ENCODE measurements at regions of chr17 and their contacts with region 1.

Region 1: GRCh38 chr17:45385331-45385997 is 47.2 kb downstream of the ARHGAP27 start:
- DNase-seq: peak; percentile 94
- H3K4me3 Mint-ChIP-seq: no peak overlapping the region
- H3K27ac Mint-ChIP-seq: no peak overlapping the region
- H3K4me1 Mint-ChIP-seq: peaks cover 13% of the 10 kb centered on the region
- H3K27me3 Mint-ChIP-seq: no peaks in the 10 kb centered on the region

Region 2: DNA sequence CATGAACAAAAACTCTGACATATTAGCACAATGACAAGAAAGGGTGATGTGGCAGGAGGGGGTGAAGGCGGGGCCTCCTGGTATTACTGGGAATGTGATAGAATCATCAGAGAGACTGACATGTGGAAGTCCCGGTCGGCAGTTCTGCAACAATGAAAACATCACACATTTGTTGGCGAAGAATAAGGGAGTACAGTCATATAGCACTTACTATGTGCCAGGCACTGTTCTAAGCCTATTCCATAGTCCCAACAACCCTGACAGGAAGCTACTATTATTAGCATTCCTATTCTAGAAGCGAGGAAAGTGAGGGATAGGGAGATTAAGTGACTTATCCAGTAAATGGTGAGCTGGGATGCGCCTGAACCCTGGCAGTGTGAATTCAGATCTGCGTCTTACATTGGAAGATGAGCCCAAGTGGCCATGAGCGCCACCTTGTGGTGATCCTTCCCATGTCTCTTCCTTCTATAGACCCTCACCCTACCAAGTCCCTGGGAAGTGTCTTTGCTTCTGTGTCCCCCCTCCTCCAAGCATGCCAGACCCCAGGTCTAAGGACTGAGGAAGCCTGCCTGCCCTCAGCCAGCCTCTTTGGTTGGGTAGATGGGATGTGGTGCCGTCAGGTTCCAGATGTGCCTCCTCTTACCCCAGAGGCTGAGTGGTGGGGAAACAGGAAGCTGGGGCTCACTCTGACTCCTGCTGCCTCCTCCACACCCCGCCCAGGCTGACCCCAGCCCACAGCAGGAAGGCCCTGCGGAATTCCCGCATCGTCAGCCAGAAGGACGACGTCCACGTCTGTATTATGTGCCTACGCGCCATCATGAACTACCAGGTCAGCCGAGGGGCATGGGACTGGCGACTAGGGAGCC is 149.8 kb before region 1 on chr17:
- CTCF ChIA-PET with region 1: interaction called, 13 read pairs
- intact Hi-C with region 1: loop called (anchors 1 kb)
- DNase-seq: peak; percentile 89
- H3K4me3 Mint-ChIP-seq: no peak overlapping the region
- H3K27ac Mint-ChIP-seq: peak overlapping the region; percentile 89
- H3K4me1 Mint-ChIP-seq: peaks cover 50% of the 10 kb centered on the region
- H3K27me3 Mint-ChIP-seq: no peaks in the 10 kb centered on the region

Region 3: DNA sequence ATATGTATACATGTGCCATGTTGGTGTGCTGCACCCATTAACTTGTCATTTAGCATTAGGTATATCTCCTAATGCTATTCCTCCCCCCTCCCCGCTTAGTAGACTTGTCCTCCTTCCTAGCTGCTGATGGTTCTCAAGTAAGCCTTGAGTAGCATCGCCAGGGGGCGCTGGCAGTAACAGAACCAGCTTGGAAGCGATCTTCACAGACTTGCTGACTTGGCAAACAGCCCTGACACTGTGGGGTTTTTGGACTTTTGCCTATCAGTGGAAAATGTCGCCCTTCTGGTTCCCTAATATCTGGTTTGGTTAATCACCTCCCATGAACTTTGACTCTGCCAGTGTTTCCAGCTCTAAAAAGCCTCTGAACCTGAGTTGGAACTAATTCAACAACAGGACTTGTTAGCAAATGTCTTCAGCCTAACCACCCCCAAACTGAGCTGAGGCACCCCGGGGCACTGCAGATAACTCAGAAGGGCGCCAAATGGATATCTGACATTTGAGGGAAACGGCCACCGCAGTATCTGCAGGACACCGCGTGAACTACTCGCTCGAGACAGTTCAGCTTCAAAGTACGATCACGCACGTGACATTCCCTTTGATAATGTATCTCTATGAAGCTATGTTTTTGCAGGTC is 108.1 kb before region 1 on chr17:
- CTCF ChIA-PET with region 1: interaction called, 116 read pairs
- intact Hi-C with region 1: loop called (anchors 1 kb)
- DNase-seq: peak; percentile 96
- H3K4me3 Mint-ChIP-seq: no peak overlapping the region
- H3K27ac Mint-ChIP-seq: peak overlapping the region; percentile 22
- H3K4me1 Mint-ChIP-seq: peaks cover 11% of the 10 kb centered on the region
- H3K27me3 Mint-ChIP-seq: no peaks in the 10 kb centered on the region

Region 4: GRCh38 chr17:45284176-45285140 is 101.0 kb before region 1 on chr17:
- CTCF ChIA-PET with region 1: interaction called, 116 read pairs
- intact Hi-C with region 1: no loop called
- DNase-seq: peak; percentile 59
- H3K4me3 Mint-ChIP-seq: no peak overlapping the region
- H3K27ac Mint-ChIP-seq: peak overlapping the region; percentile 90
- H3K4me1 Mint-ChIP-seq: peaks cover 4% of the 10 kb centered on the region
- H3K27me3 Mint-ChIP-seq: no peaks in the 10 kb centered on the region

Region 5: GRCh38 chr17:45293413-45294211 is 91.9 kb before region 1 on chr17:
- CTCF ChIA-PET with region 1: interaction called, 13 read pairs
- intact Hi-C with region 1: no loop called
- DNase-seq: peak; percentile 60
- H3K4me3 Mint-ChIP-seq: no peak overlapping the region
- H3K27ac Mint-ChIP-seq: peak overlapping the region; percentile 68
- H3K4me1 Mint-ChIP-seq: peaks cover 57% of the 10 kb centered on the region
- H3K27me3 Mint-ChIP-seq: no peaks in the 10 kb centered on the region

Region 6: GRCh38 chr17:45307290-45308015 is 78.0 kb before region 1 on chr17:
- CTCF ChIA-PET with region 1: interaction called, 11 read pairs
- intact Hi-C with region 1: loop called (anchors 2 kb)
- DNase-seq: peak; percentile 77
- H3K4me3 Mint-ChIP-seq: peak overlapping the region; percentile 48
- H3K27ac Mint-ChIP-seq: peak overlapping the region; percentile 91
- H3K4me1 Mint-ChIP-seq: peaks cover 87% of the 10 kb centered on the region
- H3K27me3 Mint-ChIP-seq: no peaks in the 10 kb centered on the region

Region 7: DNA sequence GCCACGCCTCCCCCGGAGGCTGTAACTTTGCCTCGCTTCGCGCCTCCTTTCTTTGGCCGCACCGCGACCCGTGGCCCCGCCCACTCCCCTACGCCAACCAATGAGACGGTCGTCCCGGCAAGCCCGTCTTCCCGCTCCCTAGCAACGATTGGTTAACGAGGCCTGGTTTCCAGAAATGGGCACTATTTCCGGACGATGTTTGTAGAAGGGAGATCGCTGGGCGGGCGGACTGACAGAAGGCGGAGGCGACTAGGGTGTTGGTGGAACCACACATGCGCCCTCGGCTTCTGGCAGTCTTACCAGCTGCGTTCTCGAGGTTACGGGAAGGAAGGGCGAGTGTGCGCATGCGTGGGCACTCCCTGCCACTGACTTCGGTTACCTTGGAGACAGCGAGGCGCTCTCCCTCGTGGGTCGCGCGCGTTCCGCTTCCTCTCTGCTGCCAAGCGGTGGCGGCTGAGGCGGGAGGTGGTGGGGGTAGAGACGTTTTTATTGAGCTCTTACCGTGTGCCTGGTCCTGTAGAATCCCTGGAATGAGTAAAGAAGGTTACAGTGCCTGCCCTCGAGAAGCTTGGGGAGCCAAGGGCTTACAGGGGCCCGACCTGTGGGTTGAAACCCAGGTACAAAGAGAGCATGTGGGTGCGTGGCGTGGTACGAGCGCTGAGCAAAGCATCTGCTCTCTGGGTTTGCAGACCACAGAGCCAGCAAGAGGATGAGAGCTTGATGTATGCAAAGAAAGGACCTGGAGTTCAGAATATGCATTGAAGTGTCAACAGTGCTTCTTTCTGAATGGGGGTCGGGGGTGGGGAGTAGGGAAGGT is 68.1 kb before region 1 on chr17:
- CTCF ChIA-PET with region 1: interaction called, 12 read pairs
- intact Hi-C with region 1: loop called (anchors 2 kb)
- DNase-seq: peak; percentile 100
- H3K4me3 Mint-ChIP-seq: peak overlapping the region; percentile 85
- H3K27ac Mint-ChIP-seq: peak overlapping the region; percentile 86
- H3K4me1 Mint-ChIP-seq: peaks cover 67% of the 10 kb centered on the region
- H3K27me3 Mint-ChIP-seq: no peaks in the 10 kb centered on the region

Region 8: DNA sequence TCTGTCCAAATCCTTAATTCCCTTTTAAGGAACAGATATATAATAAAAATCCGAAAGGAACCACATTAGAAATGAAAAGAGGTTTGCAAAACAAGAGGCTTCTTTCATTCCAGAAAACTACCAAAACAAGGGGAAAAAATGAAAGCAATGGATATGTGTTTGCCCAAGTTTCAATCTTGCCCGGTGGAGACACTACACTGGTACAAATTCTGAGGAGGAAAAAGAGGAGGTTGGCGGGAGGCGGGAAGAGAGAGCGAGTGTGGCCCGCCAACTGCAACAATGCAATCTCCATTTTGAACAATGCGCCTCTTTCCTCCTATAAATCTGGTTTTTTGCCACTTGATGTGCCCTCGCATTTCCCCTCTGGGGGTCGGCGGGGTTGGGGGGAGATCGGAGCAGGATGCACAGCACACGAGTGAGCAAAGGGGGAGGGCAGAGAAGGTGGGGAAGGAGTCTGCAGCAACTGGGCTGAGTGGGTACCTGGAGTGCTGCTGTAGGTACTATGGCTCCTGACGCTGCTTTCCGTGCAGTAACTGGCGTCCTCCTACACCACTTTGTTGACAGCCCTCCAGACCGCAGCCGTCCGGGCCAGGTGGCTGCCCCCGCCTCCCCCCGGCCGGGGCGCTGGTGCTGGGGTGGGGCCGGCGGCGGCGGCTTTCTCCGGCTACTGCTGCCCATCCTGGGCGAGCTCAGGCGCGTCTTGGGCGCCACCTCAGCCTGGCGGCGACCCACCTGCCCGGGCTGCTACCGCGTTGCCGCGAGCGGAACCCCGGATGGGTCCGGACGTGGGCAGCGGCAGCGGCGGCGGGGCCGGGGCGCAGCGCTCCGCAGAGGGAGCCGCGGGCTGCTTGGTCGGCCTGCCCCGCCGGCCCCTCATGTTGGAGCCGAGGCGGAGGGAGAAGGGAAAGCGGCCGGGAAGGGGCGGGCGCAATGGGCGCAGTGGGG is 198.9 kb after region 1 on chr17:
- CTCF ChIA-PET with region 1: no interaction called
- intact Hi-C with region 1: no loop called
- DNase-seq: peak; percentile 62
- H3K4me3 Mint-ChIP-seq: peak overlapping the region; percentile 95
- H3K27ac Mint-ChIP-seq: peak overlapping the region; percentile 77
- H3K4me1 Mint-ChIP-seq: peaks cover 41% of the 10 kb centered on the region
- H3K27me3 Mint-ChIP-seq: peaks cover 5% of the 10 kb centered on the region